ENCODE measurements at regions of chr18 and their contacts with region 1.

Region 1: DNA sequence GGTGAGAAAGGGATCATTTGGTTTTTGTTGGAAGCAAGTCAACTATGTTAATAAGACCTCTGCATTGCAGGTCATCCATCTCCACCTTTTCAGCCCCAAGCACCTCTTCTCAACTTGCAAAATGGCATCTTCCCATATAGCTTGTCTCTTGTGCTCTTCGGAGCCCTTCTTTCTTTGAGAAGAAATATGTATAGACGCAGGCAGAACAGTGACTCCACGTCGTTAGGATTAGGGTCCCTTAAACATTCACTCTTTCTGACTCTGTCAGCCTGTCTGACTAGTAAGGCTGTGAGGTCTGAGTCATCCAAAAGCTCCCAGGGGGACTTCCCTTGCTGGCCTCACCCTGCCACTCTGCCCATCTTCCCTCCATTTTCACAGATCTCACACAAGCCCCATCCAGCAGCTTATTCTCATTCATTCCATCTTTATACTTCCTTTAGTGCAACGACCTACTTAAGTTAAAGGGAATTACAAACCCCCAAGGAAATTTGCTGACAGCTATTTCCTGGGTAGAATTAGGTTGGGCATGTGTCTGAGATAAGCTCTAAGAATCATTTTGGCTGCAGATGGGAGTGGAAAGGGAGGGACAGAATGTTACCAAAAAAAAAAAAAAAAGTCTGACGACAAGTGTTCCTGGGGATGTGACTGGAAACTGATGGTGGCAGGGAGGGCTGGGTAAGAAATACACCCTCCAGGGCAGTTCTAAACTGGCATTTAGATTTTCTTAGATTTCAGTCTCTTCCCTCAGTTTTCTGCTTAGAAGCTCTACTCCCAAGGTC is 37.7 kb upstream of the MEX3C start:
- DNase-seq: peak; percentile 68
- ATAC-seq: peak; percentile 99
- H3K4me3 Mint-ChIP-seq: no peak overlapping the region
- H3K27ac Mint-ChIP-seq: no peak overlapping the region
- H3K4me1 Mint-ChIP-seq: peaks cover 17% of the 10 kb centered on the region
- H3K27me3 Mint-ChIP-seq: peaks cover 6% of the 10 kb centered on the region

Region 2: GRCh38 chr18:51211552-51211951 is 23.6 kb before region 1 on chr18:
- CTCF ChIA-PET with region 1: interaction called, 3 read pairs
- POLR2A ChIA-PET with region 1: no interaction called
- intact Hi-C with region 1: loop called in 1 of 2 experiments (anchors 2 kb)
- DNase-seq: peak; percentile 70
- ATAC-seq: peak; percentile 93
- H3K4me3 Mint-ChIP-seq: no peak overlapping the region
- H3K27ac Mint-ChIP-seq: peak overlapping the region; percentile 33
- H3K4me1 Mint-ChIP-seq: peaks cover 13% of the 10 kb centered on the region
- H3K27me3 Mint-ChIP-seq: peaks cover 3% of the 10 kb centered on the region

Region 3: GRCh38 chr18:51513541-51513940 is 278.3 kb after region 1 on chr18:
- CTCF ChIA-PET with region 1: no interaction called
- POLR2A ChIA-PET with region 1: no interaction called
- intact Hi-C with region 1: no loop called
- DNase-seq: no peak
- ATAC-seq: no peak
- H3K4me3 Mint-ChIP-seq: no peak overlapping the region
- H3K27ac Mint-ChIP-seq: no peak overlapping the region
- H3K4me1 Mint-ChIP-seq: no peaks in the 10 kb centered on the region
- H3K27me3 Mint-ChIP-seq: peaks cover 7% of the 10 kb centered on the region

Measured in activated CD4-positive, alpha-beta T cell treated with anti-CD3 and anti-CD28 coated beads for 36 hours (primary cell).